OCI-LY7 (cell line): ENCODE measurements at regions of chr19 and their contacts with region 1.

Region 1: DNA sequence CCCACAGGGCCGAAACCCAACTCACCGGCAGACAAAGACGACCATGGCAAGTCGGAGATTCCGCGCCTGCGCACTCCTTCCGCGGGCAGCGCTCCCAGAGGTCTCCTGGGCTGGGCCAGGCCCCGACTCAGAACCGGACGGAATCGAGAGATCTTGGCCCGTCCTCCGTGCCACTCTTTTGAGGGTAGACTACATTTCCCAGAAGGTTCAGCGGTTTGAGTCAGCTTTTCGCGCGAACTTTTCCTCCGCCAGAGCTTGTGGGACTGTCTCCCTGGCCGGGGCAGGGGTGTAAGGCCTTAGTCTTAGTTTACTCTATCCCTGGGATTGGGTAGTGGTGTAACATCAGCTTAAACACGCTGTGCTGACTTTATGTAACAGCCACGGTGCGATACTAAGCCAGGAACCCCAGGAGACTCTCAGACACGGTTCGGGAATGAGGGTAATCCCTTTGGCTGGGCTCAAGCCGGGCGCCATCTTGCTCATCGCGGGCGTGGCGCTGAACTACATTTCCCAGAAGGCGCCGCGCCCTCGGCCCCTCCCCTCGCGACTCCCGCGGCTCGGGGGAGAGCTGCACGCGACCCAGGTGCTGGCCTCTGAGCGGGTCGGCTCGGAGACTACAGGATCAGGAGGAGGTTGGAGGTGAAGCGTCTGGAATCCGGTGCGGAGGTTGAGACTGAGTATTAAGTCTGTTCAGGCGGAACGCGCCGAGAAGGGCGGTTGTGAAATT is at the start of gene ZNF260:
- DNase-seq: peak; percentile 94
- H3K4me3 ChIP-seq: peak within 1 kb of the TSS; percentile 84
- H3K27ac ChIP-seq: peak within 1 kb of the TSS; percentile 66
- H3K4me1 ChIP-seq: peaks cover 18% of the 10 kb centered on the region
- CTCF ChIP-seq: no peak
- total RNA-seq, gene ZNF260: 9.9 and 11.1 TPM in 2 replicates

Region 2: GRCh38 chr19:36573020-36573885 is 44.9 kb after region 1 on chr19 and contains the start of gene ZNF529:
- CTCF ChIA-PET with region 1: no interaction called
- POLR2A ChIA-PET with region 1: interaction called, 3 read pairs
- intact Hi-C with region 1: loop called (anchors 2 kb)
- DNase-seq: peak; percentile 94
- H3K4me3 ChIP-seq: peak within 1 kb of the TSS; percentile 91
- H3K27ac ChIP-seq: peak within 1 kb of the TSS; percentile 35
- H3K4me1 ChIP-seq: peaks cover 19% of the 10 kb centered on the region
- CTCF ChIP-seq: 0 out of 2 replicates have a peak, but pooled peaks have one; percentile 14
- total RNA-seq, gene ZNF529: 9.0 and 11.6 TPM in 2 replicates

Region 3: DNA sequence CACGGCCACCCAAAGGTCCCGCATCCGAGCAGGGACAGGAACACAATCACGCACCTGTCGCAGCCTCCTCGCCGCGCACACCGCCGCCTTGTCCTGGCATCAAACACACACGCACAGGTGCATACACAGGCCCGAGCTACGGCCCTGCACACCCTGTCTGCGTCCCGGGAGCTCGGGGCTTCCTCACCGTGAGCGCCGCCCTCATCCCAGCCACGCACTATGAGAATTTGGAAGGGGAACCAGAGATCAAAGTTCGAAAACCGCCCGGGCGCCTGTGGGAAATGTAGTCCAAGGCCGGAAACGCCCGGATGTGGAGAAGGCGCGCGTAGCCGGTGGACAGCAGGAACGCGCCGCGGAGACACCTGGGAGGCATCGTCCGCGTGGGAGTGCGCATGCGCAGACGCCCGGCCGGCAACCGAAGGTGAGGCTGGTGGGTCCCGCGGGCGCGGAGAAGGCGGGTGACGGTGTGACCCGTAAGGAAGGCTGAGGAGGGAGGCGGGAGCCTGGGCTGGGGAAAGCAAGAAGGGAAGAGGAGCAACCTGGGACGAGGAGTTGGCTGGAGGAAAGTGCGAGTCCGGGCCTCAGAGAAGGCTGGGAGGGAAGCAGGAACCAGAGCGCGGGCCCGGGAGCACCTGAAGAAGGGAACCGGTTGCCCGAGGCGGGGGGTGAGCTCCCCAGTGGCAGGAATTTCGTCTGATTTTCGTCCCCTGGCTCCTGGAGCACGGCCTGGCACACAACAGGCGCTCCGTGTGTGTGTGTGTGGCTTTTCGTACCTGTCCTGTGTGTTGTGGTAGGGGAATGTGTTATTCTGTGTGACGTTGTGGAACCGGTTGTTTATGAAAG is 159.1 kb after region 1 on chr19 and contains the start of gene ZNF567:
- CTCF ChIA-PET with region 1: no interaction called
- POLR2A ChIA-PET with region 1: no interaction called
- intact Hi-C with region 1: loop called (anchors 5 kb)
- DNase-seq: peak; percentile 98
- H3K4me3 ChIP-seq: peak within 1 kb of the TSS; percentile 80
- H3K27ac ChIP-seq: peak within 1 kb of the TSS; percentile 32
- H3K4me1 ChIP-seq: peaks cover 12% of the 10 kb centered on the region
- CTCF ChIP-seq: no peak
- total RNA-seq, gene ZNF567: 8.3 and 8.4 TPM in 2 replicates

Region 4: GRCh38 chr19:36833430-36833829 is 305.1 kb after region 1 on chr19:
- CTCF ChIA-PET with region 1: no interaction called
- POLR2A ChIA-PET with region 1: no interaction called
- intact Hi-C with region 1: no loop called
- DNase-seq: no peak
- H3K4me3 ChIP-seq: no peak overlapping the region
- H3K27ac ChIP-seq: no peak overlapping the region
- H3K4me1 ChIP-seq: no peaks in the 10 kb centered on the region
- CTCF ChIP-seq: no peak

Region 5: GRCh38 chr19:37370880-37371661 is 842.7 kb after region 1 on chr19 and contains the start of gene ZNF527:
- CTCF ChIA-PET with region 1: no interaction called
- POLR2A ChIA-PET with region 1: no interaction called
- intact Hi-C with region 1: loop called (anchors 5 kb)
- DNase-seq: peak; percentile 98
- H3K4me3 ChIP-seq: peak within 1 kb of the TSS; percentile 71
- H3K27ac ChIP-seq: peak within 1 kb of the TSS; percentile 46
- H3K4me1 ChIP-seq: peaks cover 4% of the 10 kb centered on the region
- CTCF ChIP-seq: no peak; the same call in 1 of the 2 replicates
- total RNA-seq, gene ZNF527: 7.9 and 9.2 TPM in 2 replicates